AG04450 (cell line): ENCODE measurements at regions of chr5 and their contacts with region 1.

Region 1: GRCh38 chr5:110916381-110917049 is 155.0 kb upstream of the TSLP start:
- DNase-seq: peak; percentile 89
- H3K4me3 ChIP-seq: no peak overlapping the region; the same call in 1 of the 2 replicates
- H3K27ac ChIP-seq: peak overlapping the region; percentile 80
- H3K27me3 ChIP-seq: no peaks in the 10 kb centered on the region
- CTCF ChIP-seq: no peak

Region 2: DNA sequence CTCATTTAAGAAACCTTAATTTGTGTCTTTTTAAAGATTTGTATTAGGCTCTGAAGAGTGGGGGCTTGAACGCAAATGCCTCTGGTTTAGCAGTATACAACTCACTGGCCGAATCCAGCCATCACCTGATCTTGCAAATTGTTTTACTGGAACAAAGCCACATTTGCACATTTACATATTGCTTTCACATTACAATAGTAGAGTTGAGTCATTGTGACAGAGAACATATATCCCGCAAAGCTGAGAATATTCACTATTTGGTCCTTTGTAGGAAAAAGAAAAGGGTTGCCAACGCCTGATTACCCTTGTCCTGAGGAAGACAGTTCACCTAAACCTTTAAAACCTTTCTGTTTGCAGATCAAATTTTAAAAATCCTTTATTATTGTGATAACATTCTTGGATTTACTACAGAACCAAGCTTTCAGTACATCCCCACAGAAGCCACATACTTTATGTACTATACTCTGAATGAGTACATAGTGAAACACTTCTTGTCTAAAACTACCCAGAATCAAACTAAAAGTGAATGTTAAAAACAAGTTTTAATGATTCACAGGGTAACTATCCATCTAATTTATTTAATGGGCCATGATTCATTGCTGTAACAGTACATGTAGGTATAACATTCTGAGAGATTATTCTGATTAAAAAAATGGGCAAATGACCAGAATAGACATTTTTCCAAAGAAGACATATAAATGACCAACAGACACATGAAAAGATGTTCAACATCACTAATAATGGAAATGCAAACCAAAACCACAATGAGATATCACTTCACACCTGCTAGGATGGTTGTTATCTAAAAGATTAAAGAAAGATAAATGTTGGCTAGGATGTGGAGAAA is 16.7 kb before region 1 on chr5:
- CTCF ChIA-PET with region 1: no interaction called
- POLR2A ChIA-PET with region 1: interaction called, 14 read pairs
- DNase-seq: no peak
- H3K4me3 ChIP-seq: no peak overlapping the region
- H3K27ac ChIP-seq: no peak overlapping the region
- H3K27me3 ChIP-seq: no peaks in the 10 kb centered on the region
- CTCF ChIP-seq: no peak